Activated CD4-positive, alpha-beta T cell treated with anti-CD3 and anti-CD28 coated beads for 36 hours (primary cell): ENCODE measurements at regions of chr15 and their contacts with region 1.

Region 1: DNA sequence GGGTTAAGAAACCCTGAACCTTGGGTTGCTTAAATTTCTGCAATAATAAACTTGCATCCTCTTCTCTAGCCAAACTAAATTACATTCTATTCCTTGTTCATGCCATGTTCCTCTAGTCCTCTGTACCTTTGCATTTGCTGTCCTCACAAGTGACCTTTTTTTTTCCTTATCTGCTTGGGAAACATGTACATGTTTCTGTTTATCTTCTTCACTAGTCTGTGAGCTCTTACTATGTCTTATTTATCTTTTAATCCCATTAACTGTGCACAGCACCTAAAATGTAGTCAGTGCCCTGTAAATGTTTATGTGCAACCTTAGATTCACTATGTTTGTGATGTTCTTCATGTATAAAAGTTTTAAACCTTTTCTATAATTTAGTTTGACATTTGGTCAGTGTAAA is 61.9 kb downstream of the REC114 start:
- DNase-seq: no peak
- ATAC-seq: no peak
- H3K4me3 Mint-ChIP-seq: no peak overlapping the region
- H3K27ac Mint-ChIP-seq: no peak overlapping the region
- H3K4me1 Mint-ChIP-seq: no peaks in the 10 kb centered on the region
- H3K27me3 Mint-ChIP-seq: peaks cover 2% of the 10 kb centered on the region

Region 2: GRCh38 chr15:73433878-73434277 is 71.0 kb before region 1 on chr15:
- CTCF ChIA-PET with region 1: no interaction called
- POLR2A ChIA-PET with region 1: no interaction called
- intact Hi-C with region 1: loop called in 1 of 2 experiments (anchors 2 kb)
- DNase-seq: no peak
- ATAC-seq: no peak
- H3K4me3 Mint-ChIP-seq: no peak overlapping the region
- H3K27ac Mint-ChIP-seq: no peak overlapping the region
- H3K4me1 Mint-ChIP-seq: no peaks in the 10 kb centered on the region
- H3K27me3 Mint-ChIP-seq: peaks cover 24% of the 10 kb centered on the region

Region 3: DNA sequence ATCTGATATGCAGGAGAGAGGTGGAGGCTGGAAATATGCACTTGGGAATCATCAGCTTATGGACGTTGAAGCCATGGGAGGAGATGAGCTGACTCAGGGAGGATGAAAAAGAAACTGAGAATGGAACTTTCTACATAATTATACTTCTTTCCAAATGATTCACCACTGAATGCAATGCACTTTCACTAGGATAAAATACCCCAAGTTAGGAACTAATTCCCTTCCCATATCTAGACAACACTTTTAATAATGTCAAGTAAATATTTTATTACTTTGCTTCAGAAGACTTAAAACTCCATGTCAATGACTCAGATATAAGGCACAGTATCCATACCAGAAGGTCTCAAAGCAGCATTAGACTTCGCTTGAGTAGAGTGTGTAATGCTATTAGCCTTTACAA is 104.1 kb after region 1 on chr15:
- CTCF ChIA-PET with region 1: no interaction called
- POLR2A ChIA-PET with region 1: no interaction called
- intact Hi-C with region 1: no loop called
- DNase-seq: no peak
- ATAC-seq: peak; percentile 49
- H3K4me3 Mint-ChIP-seq: no peak overlapping the region
- H3K27ac Mint-ChIP-seq: no peak overlapping the region
- H3K4me1 Mint-ChIP-seq: peaks cover 54% of the 10 kb centered on the region
- H3K27me3 Mint-ChIP-seq: no peaks in the 10 kb centered on the region